GM12878 (cell line): ENCODE measurements at regions of chr12 and their contacts with region 1.

Region 1: GRCh38 chr12:99053616-99054362 is 408.7 kb downstream of the APAF1 start:
- DNase-seq: no peak
- ATAC-seq: no peak
- H3K4me3 ChIP-seq: no peak overlapping the region
- H3K27ac ChIP-seq: no peak overlapping the region
- H3K4me1 ChIP-seq: no peaks in the 10 kb centered on the region
- H3K27me3 ChIP-seq: no peaks in the 10 kb centered on the region
- CTCF ChIP-seq: no peak
- EP300 ChIP-seq: no peak
- POLR2A ChIP-seq: no peak
- RAD21 ChIP-seq: no peak

Region 2: GRCh38 chr12:98780261-98780660 is 273.5 kb before region 1 on chr12:
- CTCF ChIA-PET with region 1: no interaction called
- POLR2A ChIA-PET with region 1: no interaction called
- RAD21 ChIA-PET with region 1: no interaction called
- SMC1A ChIA-PET with region 1: no interaction called
- in situ Hi-C with region 1: no loop called
- intact Hi-C with region 1: no loop called
- DNase-seq: no peak
- ATAC-seq: no peak
- H3K4me3 ChIP-seq: no peak overlapping the region
- H3K27ac ChIP-seq: no peak overlapping the region
- H3K4me1 ChIP-seq: no peaks in the 10 kb centered on the region
- H3K27me3 ChIP-seq: no peaks in the 10 kb centered on the region
- CTCF ChIP-seq: no peak
- EP300 ChIP-seq: no peak
- POLR2A ChIP-seq: no peak
- RAD21 ChIP-seq: no peak

Region 3: GRCh38 chr12:99035803-99036202 is 18.0 kb before region 1 on chr12:
- CTCF ChIA-PET with region 1: no interaction called
- POLR2A ChIA-PET with region 1: no interaction called
- RAD21 ChIA-PET with region 1: no interaction called
- SMC1A ChIA-PET with region 1: no interaction called
- in situ Hi-C with region 1: no loop called
- intact Hi-C with region 1: no loop called
- DNase-seq: no peak
- ATAC-seq: no peak
- H3K4me3 ChIP-seq: no peak overlapping the region
- H3K27ac ChIP-seq: no peak overlapping the region
- H3K4me1 ChIP-seq: no peaks in the 10 kb centered on the region
- H3K27me3 ChIP-seq: no peaks in the 10 kb centered on the region; a peak in 1 of 4 replicates
- CTCF ChIP-seq: no peak
- EP300 ChIP-seq: no peak
- POLR2A ChIP-seq: no peak
- RAD21 ChIP-seq: no peak

Region 4: DNA sequence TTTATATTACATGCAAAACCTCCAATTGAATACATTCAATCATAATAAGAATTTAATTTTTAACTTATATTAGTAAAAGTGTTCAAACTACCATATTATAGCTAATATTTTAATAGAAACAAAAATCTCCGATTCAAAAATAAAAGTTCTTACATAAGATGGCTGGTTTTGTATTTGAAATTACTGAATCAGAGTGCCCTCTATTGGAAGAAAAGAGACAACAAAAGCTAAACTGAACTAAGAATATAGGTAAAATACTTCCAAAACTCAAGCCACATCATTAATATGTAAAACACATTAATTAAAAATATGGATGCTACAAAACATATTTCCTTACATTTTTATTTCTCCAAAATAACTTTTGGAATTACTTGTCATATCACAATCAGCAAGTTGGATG is 714.0 kb after region 1 on chr12:
- CTCF ChIA-PET with region 1: interaction called, 12 read pairs
- POLR2A ChIA-PET with region 1: no interaction called
- RAD21 ChIA-PET with region 1: no interaction called
- SMC1A ChIA-PET with region 1: no interaction called
- in situ Hi-C with region 1: no loop called
- intact Hi-C with region 1: no loop called
- DNase-seq: no peak
- ATAC-seq: no peak
- H3K4me3 ChIP-seq: no peak overlapping the region
- H3K27ac ChIP-seq: no peak overlapping the region
- H3K4me1 ChIP-seq: no peaks in the 10 kb centered on the region
- H3K27me3 ChIP-seq: no peaks in the 10 kb centered on the region
- CTCF ChIP-seq: peak in 1 of 3 experiments; percentile 41; a peak in 3 of 6 replicates
- EP300 ChIP-seq: no peak
- POLR2A ChIP-seq: no peak
- RAD21 ChIP-seq: peak; percentile 51; the same call in 1 of the 2 replicates